ENCODE measurements at regions of chr9 and their contacts with region 1.

Region 1: GRCh38 chr9:70111042-70111602 is 67.5 kb downstream of the MAMDC2 start:
- DNase-seq: peak; percentile 57
- H3K4me3 Mint-ChIP-seq: no peak overlapping the region
- H3K27ac Mint-ChIP-seq: no peak overlapping the region
- H3K4me1 Mint-ChIP-seq: peaks cover 3% of the 10 kb centered on the region
- H3K27me3 Mint-ChIP-seq: peaks cover 17% of the 10 kb centered on the region

Region 2: GRCh38 chr9:69905291-69905690 is 205.8 kb before region 1 on chr9:
- CTCF ChIA-PET with region 1: no interaction called
- POLR2A ChIA-PET with region 1: no interaction called
- DNase-seq: no peak
- H3K4me3 Mint-ChIP-seq: no peak overlapping the region
- H3K27ac Mint-ChIP-seq: no peak overlapping the region
- H3K4me1 Mint-ChIP-seq: no peaks in the 10 kb centered on the region
- H3K27me3 Mint-ChIP-seq: peaks cover 9% of the 10 kb centered on the region

Region 3: GRCh38 chr9:69971643-69972449 is 139.3 kb before region 1 on chr9:
- CTCF ChIA-PET with region 1: interaction called, 85 read pairs
- POLR2A ChIA-PET with region 1: no interaction called
- DNase-seq: peak; percentile 57
- H3K4me3 Mint-ChIP-seq: no peak overlapping the region
- H3K27ac Mint-ChIP-seq: no peak overlapping the region
- H3K4me1 Mint-ChIP-seq: no peaks in the 10 kb centered on the region
- H3K27me3 Mint-ChIP-seq: peaks cover 12% of the 10 kb centered on the region

Region 4: DNA sequence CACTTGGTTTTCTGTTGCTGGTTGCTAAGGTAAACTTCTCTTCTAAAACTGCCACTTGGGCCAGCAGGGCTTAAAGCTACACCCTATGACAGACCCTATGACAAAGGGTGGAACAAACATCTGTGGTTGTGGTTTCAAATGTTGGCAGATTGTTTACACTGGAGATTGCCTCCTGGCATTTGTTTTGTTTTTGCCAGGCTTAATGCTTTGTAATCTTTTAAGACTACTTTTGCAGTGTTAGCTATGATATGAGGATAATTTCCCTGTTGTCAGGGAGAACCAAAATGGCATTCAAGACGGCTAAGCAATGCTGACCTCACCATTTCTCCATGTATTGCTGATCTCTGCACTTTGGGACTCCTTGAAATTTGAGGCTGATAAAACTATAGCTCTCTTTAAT is 17.2 kb before region 1 on chr9:
- CTCF ChIA-PET with region 1: interaction called, 14 read pairs
- POLR2A ChIA-PET with region 1: no interaction called
- DNase-seq: no peak
- H3K4me3 Mint-ChIP-seq: no peak overlapping the region
- H3K27ac Mint-ChIP-seq: no peak overlapping the region
- H3K4me1 Mint-ChIP-seq: no peaks in the 10 kb centered on the region
- H3K27me3 Mint-ChIP-seq: peaks cover 5% of the 10 kb centered on the region

Measured in activated CD4-positive, alpha-beta memory T cell treated with anti-CD3 and anti-CD28 coated beads, Interleukin-2, amount 10 ng/mL, durations not matched to agents 7 days and 5 days (primary cell).